CD8-positive, alpha-beta T cell (primary cell): ENCODE measurements at regions of chr12 and their contacts with region 1.

Region 1: GRCh38 chr12:91811481-91812287 is 334.0 kb downstream of the BTG1 start:
- DNase-seq: peak; percentile 69 to 87 (median 81)
- ATAC-seq: peak; percentile 89
- H3K4me3 ChIP-seq: no peak overlapping the region
- H3K4me3 Mint-ChIP-seq: no peak overlapping the region
- H3K27ac ChIP-seq: no peak overlapping the region
- H3K27ac Mint-ChIP-seq: peak overlapping the region; percentile 89
- H3K4me1 ChIP-seq: peaks cover 5% of the 10 kb centered on the region
- H3K4me1 Mint-ChIP-seq: peaks cover 30% of the 10 kb centered on the region
- H3K27me3 ChIP-seq: no peaks in the 10 kb centered on the region
- H3K27me3 Mint-ChIP-seq: no peaks in the 10 kb centered on the region
- CTCF ChIP-seq: peak; percentile 84

Region 2: GRCh38 chr12:91588874-91589454 is 222.7 kb before region 1 on chr12:
- CTCF ChIA-PET with region 1: no interaction called
- POLR2A ChIA-PET with region 1: no interaction called
- intact Hi-C with region 1: no loop called
- DNase-seq: no peak
- ATAC-seq: no peak
- H3K4me3 ChIP-seq: no peak overlapping the region
- H3K4me3 Mint-ChIP-seq: no peak overlapping the region
- H3K27ac ChIP-seq: no peak overlapping the region
- H3K27ac Mint-ChIP-seq: no peak overlapping the region
- H3K4me1 ChIP-seq: peaks cover 7% of the 10 kb centered on the region
- H3K4me1 Mint-ChIP-seq: peaks cover 12% of the 10 kb centered on the region
- H3K27me3 ChIP-seq: no peaks in the 10 kb centered on the region
- H3K27me3 Mint-ChIP-seq: no peaks in the 10 kb centered on the region
- CTCF ChIP-seq: no peak

Region 3: GRCh38 chr12:91704446-91704845 is 107.2 kb before region 1 on chr12:
- CTCF ChIA-PET with region 1: no interaction called
- POLR2A ChIA-PET with region 1: no interaction called
- intact Hi-C with region 1: no loop called
- DNase-seq: no peak
- ATAC-seq: no peak
- H3K4me3 ChIP-seq: no peak overlapping the region
- H3K4me3 Mint-ChIP-seq: no peak overlapping the region
- H3K27ac ChIP-seq: no peak overlapping the region
- H3K27ac Mint-ChIP-seq: no peak overlapping the region
- H3K4me1 ChIP-seq: no peaks in the 10 kb centered on the region
- H3K4me1 Mint-ChIP-seq: no peaks in the 10 kb centered on the region
- H3K27me3 ChIP-seq: no peaks in the 10 kb centered on the region
- H3K27me3 Mint-ChIP-seq: no peaks in the 10 kb centered on the region
- CTCF ChIP-seq: no peak

Region 4: GRCh38 chr12:91861554-91861953 is 49.9 kb after region 1 on chr12:
- CTCF ChIA-PET with region 1: interaction called, 5 read pairs
- POLR2A ChIA-PET with region 1: interaction called, 4 read pairs
- intact Hi-C with region 1: loop called in 1 of 2 experiments (anchors 5 kb)
- DNase-seq: no peak
- ATAC-seq: no peak
- H3K4me3 ChIP-seq: no peak overlapping the region
- H3K4me3 Mint-ChIP-seq: no peak overlapping the region
- H3K27ac ChIP-seq: no peak overlapping the region
- H3K27ac Mint-ChIP-seq: no peak overlapping the region
- H3K4me1 ChIP-seq: peaks cover 11% of the 10 kb centered on the region
- H3K4me1 Mint-ChIP-seq: peaks cover 43% of the 10 kb centered on the region
- H3K27me3 ChIP-seq: no peaks in the 10 kb centered on the region
- H3K27me3 Mint-ChIP-seq: no peaks in the 10 kb centered on the region
- CTCF ChIP-seq: no peak

Region 5: GRCh38 chr12:91924827-91925226 is 113.1 kb after region 1 on chr12:
- CTCF ChIA-PET with region 1: no interaction called
- POLR2A ChIA-PET with region 1: no interaction called
- intact Hi-C with region 1: no loop called
- DNase-seq: no peak
- ATAC-seq: no peak
- H3K4me3 ChIP-seq: no peak overlapping the region
- H3K4me3 Mint-ChIP-seq: no peak overlapping the region
- H3K27ac ChIP-seq: no peak overlapping the region
- H3K27ac Mint-ChIP-seq: no peak overlapping the region
- H3K4me1 ChIP-seq: no peaks in the 10 kb centered on the region
- H3K4me1 Mint-ChIP-seq: peaks cover 25% of the 10 kb centered on the region
- H3K27me3 ChIP-seq: no peaks in the 10 kb centered on the region
- H3K27me3 Mint-ChIP-seq: no peaks in the 10 kb centered on the region
- CTCF ChIP-seq: no peak

Region 6: DNA sequence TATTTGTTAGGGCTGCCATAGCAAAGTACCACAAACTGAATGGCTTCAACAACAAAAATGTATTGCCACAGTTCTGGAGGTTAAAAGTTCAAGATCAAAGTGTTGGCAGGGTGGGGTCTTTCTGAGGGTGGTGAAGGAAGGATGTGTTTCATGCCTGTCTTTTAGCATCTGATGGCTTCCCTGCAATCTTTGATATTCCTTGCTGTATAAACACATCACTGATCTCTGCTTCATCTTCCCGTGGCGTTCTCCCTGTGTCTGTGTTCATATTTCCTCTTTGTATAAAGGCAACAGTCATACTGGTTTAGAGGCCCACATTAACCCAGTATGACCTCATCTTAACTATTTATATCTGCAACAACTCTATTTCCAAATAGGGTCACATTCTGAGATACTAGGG is 166.5 kb after region 1 on chr12:
- CTCF ChIA-PET with region 1: interaction called, 8 read pairs
- POLR2A ChIA-PET with region 1: interaction called, 3 read pairs
- intact Hi-C with region 1: loop called (anchors 5 kb)
- DNase-seq: peak in 8 of 9 experiments; percentile 7 to 87 (median 48)
- ATAC-seq: peak; percentile 85
- H3K4me3 ChIP-seq: no peak overlapping the region
- H3K4me3 Mint-ChIP-seq: peak overlapping the region; percentile 2
- H3K27ac ChIP-seq: peak overlapping the region; percentile 40 to 49
- H3K27ac Mint-ChIP-seq: peak overlapping the region; percentile 74
- H3K4me1 ChIP-seq: peaks cover 22% of the 10 kb centered on the region
- H3K4me1 Mint-ChIP-seq: peaks cover 60% of the 10 kb centered on the region
- H3K27me3 ChIP-seq: no peaks in the 10 kb centered on the region
- H3K27me3 Mint-ChIP-seq: no peaks in the 10 kb centered on the region
- CTCF ChIP-seq: no peak

Region 7: DNA sequence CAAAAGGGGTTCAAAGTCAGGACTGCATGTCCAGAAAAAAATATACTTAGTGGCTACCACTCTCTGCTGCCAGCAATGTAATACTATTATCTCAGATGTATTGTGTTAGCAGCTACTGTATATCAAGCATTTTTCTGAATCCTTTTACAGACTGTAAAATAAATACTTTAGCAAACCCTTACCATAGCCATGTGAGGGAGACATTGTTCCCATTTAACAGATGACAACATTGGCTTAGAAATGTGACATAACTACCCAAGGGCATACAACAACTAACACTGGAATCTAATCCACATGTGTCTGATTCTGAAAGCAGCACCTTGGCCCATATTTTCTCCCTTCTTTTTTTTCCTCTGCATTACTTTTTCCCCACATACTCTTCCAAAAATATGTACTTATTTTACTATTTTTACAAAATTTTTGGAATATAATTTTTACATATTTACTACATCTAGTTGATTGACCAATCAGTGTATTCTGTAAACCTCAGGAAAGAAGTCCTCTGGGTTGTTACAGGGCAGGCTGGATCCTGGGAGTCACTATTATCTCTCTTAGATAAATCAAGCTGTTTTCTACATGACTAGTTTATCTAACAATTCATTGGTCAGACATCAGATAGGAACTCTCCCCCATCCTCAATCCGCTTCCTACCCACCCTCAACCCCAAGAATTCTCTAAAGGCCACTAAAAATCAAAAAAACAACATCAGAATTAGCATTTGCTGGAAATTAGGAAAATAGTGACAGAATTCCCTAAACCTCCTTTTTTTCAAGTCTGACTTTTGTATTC is 179.9 kb after region 1 on chr12:
- CTCF ChIA-PET with region 1: interaction called, 11 read pairs
- POLR2A ChIA-PET with region 1: interaction called, 5 read pairs
- intact Hi-C with region 1: loop called in 1 of 2 experiments (anchors 5 kb)
- DNase-seq: peak in 2 of 9 experiments; percentile 61 to 77
- ATAC-seq: peak; percentile 71
- H3K4me3 ChIP-seq: no peak overlapping the region
- H3K4me3 Mint-ChIP-seq: no peak overlapping the region
- H3K27ac ChIP-seq: no peak overlapping the region
- H3K27ac Mint-ChIP-seq: peak overlapping the region; percentile 66
- H3K4me1 ChIP-seq: peaks cover 25% of the 10 kb centered on the region
- H3K4me1 Mint-ChIP-seq: peaks cover 65% of the 10 kb centered on the region
- H3K27me3 ChIP-seq: no peaks in the 10 kb centered on the region
- H3K27me3 Mint-ChIP-seq: no peaks in the 10 kb centered on the region
- CTCF ChIP-seq: peak; percentile 28

Region 8: GRCh38 chr12:92136965-92137721 is 325.5 kb after region 1 on chr12:
- CTCF ChIA-PET with region 1: interaction called, 15 read pairs
- POLR2A ChIA-PET with region 1: interaction called, 8 read pairs
- intact Hi-C with region 1: loop called in 1 of 2 experiments (anchors 5 kb)
- DNase-seq: peak in 1 of 9 experiments; percentile 43
- ATAC-seq: no peak
- H3K4me3 ChIP-seq: peak overlapping the region; percentile 66 to 91
- H3K4me3 Mint-ChIP-seq: peak overlapping the region; percentile 96
- H3K27ac ChIP-seq: peak overlapping the region; percentile 45 to 92
- H3K27ac Mint-ChIP-seq: peak overlapping the region; percentile 99
- H3K4me1 ChIP-seq: peaks cover 47% of the 10 kb centered on the region
- H3K4me1 Mint-ChIP-seq: peaks cover 51% of the 10 kb centered on the region
- H3K27me3 ChIP-seq: no peaks in the 10 kb centered on the region
- H3K27me3 Mint-ChIP-seq: no peaks in the 10 kb centered on the region
- CTCF ChIP-seq: no peak

Region 9: GRCh38 chr12:92570056-92570753 is 758.5 kb after region 1 on chr12:
- CTCF ChIA-PET with region 1: interaction called, 7 read pairs
- POLR2A ChIA-PET with region 1: no interaction called
- intact Hi-C with region 1: loop called (anchors 1 to 2 kb)
- DNase-seq: peak in 7 of 9 experiments; percentile 25 to 83 (median 45)
- ATAC-seq: peak; percentile 93
- H3K4me3 ChIP-seq: peak overlapping the region in 1 of 2 experiments; percentile 30
- H3K4me3 Mint-ChIP-seq: no peak overlapping the region
- H3K27ac ChIP-seq: no peak overlapping the region
- H3K27ac Mint-ChIP-seq: no peak overlapping the region
- H3K4me1 ChIP-seq: peaks cover 22% of the 10 kb centered on the region
- H3K4me1 Mint-ChIP-seq: peaks cover 6% of the 10 kb centered on the region
- H3K27me3 ChIP-seq: no peaks in the 10 kb centered on the region
- H3K27me3 Mint-ChIP-seq: no peaks in the 10 kb centered on the region
- CTCF ChIP-seq: peak; percentile 98